PC-9 (cell line): ENCODE measurements at regions of chr16 and their contacts with region 1.

Region 1: GRCh38 chr16:77584205-77584859 is 138.0 kb upstream of the NUDT7 start:
- DNase-seq: peak; percentile 21 to 40
- H3K4me3 ChIP-seq: no peak overlapping the region
- H3K27ac ChIP-seq: no peak overlapping the region
- H3K4me1 ChIP-seq: no peaks in the 10 kb centered on the region
- H3K27me3 ChIP-seq: peaks cover 26% of the 10 kb centered on the region
- CTCF ChIP-seq: peak; percentile 96

Region 2: DNA sequence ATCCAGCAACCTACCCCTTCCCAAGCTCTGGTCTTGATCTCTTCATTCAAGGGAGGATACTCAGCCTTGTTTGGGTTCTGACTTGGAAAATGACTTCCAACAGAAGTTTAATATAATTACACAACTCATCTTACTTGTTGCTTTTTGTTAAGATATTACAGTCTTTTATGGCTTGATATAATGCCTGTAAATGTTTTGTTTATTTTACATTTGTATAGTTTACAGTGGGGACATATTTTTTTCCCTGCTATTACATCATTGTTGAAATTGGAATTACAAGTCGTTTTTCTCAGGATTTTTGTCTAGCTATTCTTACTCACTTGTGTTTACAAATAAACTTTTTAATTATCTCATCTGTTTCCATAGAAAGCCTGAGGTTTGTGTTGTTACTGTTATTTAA is 871.1 kb before region 1 on chr16:
- CTCF ChIA-PET with region 1: no interaction called
- POLR2A ChIA-PET with region 1: no interaction called
- intact Hi-C with region 1: no loop called
- DNase-seq: no peak
- H3K4me3 ChIP-seq: no peak overlapping the region
- H3K27ac ChIP-seq: no peak overlapping the region
- H3K4me1 ChIP-seq: no peaks in the 10 kb centered on the region
- H3K27me3 ChIP-seq: no peaks in the 10 kb centered on the region
- CTCF ChIP-seq: no peak

Region 3: GRCh38 chr16:77971306-77972271 is 387.3 kb after region 1 on chr16:
- CTCF ChIA-PET with region 1: no interaction called
- POLR2A ChIA-PET with region 1: no interaction called
- intact Hi-C with region 1: loop called (anchors 1 kb)
- DNase-seq: peak in 1 of 2 experiments; percentile 39
- H3K4me3 ChIP-seq: no peak overlapping the region
- H3K27ac ChIP-seq: no peak overlapping the region
- H3K4me1 ChIP-seq: no peaks in the 10 kb centered on the region
- H3K27me3 ChIP-seq: peaks cover 20% of the 10 kb centered on the region
- CTCF ChIP-seq: peak; percentile 82